MCF 10A (cell line): ENCODE measurements at regions of chr22 and their contacts with region 1.

Region 1: DNA sequence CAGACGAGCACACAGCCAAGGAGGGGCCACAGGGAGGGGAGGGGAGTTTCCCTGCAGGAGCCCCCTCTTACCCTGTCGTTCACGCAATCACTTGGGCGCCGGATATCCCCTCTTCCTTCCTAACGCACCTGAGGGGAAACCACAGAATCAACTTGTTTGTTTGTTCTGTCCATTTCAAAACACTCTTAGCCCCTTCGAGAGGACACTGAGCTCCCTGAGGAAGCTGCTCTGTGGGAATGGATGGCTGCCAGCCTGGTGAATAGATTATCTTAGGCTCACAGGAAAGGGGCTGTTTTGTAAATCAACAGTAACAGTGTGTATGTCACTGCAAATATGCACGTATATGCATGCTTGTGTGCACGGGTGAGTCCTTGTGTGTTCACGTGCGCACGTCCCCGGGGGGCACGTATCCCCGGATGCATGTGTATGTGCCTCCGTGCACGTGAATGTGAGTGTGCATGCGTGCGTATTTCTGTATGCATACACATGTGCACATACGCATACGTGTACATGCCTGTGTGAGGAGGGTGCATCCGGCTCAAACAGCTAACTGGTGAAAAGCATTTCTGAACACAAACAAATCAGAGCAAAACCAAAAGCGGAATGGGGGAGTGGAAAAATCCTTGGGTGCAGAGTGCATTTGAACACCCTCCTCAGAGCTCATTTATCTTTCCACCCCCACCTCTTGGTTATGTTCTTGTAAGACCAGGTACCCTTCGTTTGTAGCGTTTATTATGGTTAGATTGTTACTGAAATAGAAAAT is 7.2 kb downstream of the ARSA start:
- DNase-seq: peak; percentile 17
- H3K4me3 Mint-ChIP-seq: peak overlapping the region; percentile 68
- H3K27ac Mint-ChIP-seq: no peak overlapping the region
- H3K4me1 Mint-ChIP-seq: peaks cover 26% of the 10 kb centered on the region
- H3K27me3 Mint-ChIP-seq: no peaks in the 10 kb centered on the region
- CTCF ChIP-seq: no peak

Region 2: DNA sequence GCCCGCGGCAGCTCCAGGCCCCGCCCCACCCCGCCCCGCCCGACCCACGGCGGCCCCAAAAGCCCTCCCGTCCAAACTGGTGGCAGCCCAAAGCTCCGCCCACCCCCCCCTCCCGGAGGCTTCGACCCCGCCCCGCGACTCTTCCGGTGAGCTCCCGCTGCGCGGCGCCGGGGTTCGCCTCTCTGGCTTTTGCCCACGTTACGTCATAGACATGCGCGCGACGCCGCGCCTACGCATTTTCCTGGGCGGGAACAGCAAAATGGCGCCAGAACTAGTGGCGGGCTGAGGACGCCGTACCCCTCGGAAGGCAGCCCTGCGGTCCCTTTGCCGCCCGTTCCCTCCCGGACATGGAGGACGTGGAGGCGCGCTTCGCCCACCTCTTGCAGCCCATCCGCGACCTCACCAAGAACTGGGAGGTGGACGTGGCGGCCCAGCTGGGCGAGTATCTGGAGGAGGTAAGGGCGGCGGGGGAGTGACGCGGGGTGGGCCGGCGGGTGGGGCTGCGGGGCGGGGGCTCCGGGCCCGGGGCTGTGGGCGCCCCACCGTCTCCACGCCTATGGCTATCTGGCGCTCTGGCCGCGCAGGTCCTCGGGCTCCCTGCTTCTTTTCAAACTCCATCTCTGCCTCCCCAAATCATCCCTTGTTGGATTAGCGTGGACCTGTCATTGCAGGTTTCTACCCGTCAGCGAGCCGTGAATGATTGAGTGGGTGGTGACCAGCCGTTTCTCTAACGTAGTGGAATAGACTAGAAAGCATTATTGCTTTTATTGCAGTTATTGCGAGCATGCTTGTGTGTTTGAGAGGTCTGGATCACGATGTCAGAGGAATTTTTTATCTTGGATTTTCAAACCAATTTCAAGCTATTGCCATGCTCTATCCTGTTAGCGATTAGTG is 112.5 kb before region 1 on chr22 and contains the start of gene NCAPH2:
- CTCF ChIA-PET with region 1: interaction called, 4 read pairs
- POLR2A ChIA-PET with region 1: interaction called, 16 read pairs
- intact Hi-C with region 1: loop called (anchors 5 kb)
- DNase-seq: peak; percentile 96
- H3K4me3 Mint-ChIP-seq: peak within 1 kb of the TSS; percentile 92
- H3K27ac Mint-ChIP-seq: peak within 1 kb of the TSS; percentile 93
- H3K4me1 Mint-ChIP-seq: peaks cover 12% of the 10 kb centered on the region
- H3K27me3 Mint-ChIP-seq: no peaks in the 10 kb centered on the region
- CTCF ChIP-seq: no peak
- total RNA-seq, gene NCAPH2: 31.6 and 39.8 TPM in 2 replicates

Region 3: DNA sequence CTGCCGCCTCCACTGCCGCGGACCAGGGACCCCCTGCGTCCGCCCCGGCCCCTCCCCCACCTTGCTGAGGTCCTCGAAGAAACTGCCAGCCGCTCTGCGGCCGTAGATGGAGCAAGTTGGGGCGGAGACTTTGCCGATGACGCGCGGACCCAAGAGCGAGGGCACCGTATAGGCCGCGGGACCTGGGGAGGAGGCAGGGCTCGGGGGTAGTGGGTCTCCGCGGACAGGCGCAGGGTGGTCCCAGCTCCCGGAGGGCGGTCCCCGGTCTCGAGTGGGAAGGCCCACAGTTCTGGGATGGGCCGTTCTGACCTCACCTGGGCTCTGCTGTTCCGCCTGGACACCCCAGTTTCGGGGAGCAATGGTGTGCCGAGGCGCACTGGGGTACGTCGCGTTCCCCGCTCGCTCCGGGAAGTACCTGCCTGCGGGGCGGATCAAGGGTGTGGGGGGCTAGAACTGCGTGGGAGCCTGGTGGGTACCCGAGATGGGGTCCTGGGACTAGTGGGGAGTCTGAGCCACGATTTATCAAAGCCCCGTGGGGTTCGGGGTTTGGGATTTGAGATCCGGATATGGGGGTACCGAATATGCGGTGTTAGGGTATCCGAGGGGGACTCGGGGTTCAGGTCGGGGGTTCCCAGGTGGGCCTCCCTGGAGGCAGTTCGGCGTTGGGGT is 89.8 kb before region 1 on chr22:
- CTCF ChIA-PET with region 1: interaction called, 17 read pairs
- POLR2A ChIA-PET with region 1: interaction called, 74 read pairs
- intact Hi-C with region 1: loop called (anchors 2 kb)
- DNase-seq: peak; percentile 94
- H3K4me3 Mint-ChIP-seq: peak overlapping the region; percentile 85
- H3K27ac Mint-ChIP-seq: peak overlapping the region; percentile 97
- H3K4me1 Mint-ChIP-seq: peaks cover 22% of the 10 kb centered on the region
- H3K27me3 Mint-ChIP-seq: no peaks in the 10 kb centered on the region
- CTCF ChIP-seq: no peak

Region 4: GRCh38 chr22:50576070-50576469 is 44.7 kb before region 1 on chr22:
- CTCF ChIA-PET with region 1: interaction called, 13 read pairs
- POLR2A ChIA-PET with region 1: interaction called, 8 read pairs
- intact Hi-C with region 1: no loop called
- DNase-seq: peak; percentile 62
- H3K4me3 Mint-ChIP-seq: no peak overlapping the region
- H3K27ac Mint-ChIP-seq: no peak overlapping the region
- H3K4me1 Mint-ChIP-seq: no peaks in the 10 kb centered on the region
- H3K27me3 Mint-ChIP-seq: no peaks in the 10 kb centered on the region
- CTCF ChIP-seq: peak; percentile 12